ENCODE measurements at regions of chr5 and their contacts with region 1.

Region 1: GRCh38 chr5:137272826-137273225 is 226.3 kb downstream of the SPOCK1 start:
- DNase-seq: no peak
- ATAC-seq: no peak
- H3K4me3 ChIP-seq: no peak overlapping the region
- H3K27ac ChIP-seq: no peak overlapping the region
- H3K4me1 ChIP-seq: peaks cover 0 to 24% (median 11%) of the 10 kb centered on the region in 9 donors
- H3K27me3 ChIP-seq: no peaks in the 10 kb centered on the region
- CTCF ChIP-seq: no peak

Region 2: DNA sequence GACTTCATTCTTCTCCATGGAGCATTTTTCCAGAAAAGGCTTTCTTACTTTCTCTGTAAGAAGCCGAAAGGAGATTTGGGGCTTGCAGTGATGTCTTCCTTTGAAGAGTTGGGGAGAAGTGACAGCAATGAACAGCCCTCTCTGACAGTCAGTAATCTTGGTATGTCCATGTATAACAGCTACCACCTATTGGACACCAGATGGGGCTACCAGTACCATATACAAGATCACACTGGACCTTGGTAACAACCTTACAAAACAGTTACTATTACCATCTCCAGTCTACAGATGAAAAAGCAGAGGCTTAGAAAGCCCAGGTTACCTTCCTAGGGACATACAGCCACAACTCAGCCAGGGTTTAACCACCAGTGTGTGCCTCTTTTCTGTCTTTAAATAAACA is 634.7 kb before region 1 on chr5:
- intact Hi-C with region 1: no loop called
- DNase-seq: no peak
- ATAC-seq: no peak
- H3K4me3 ChIP-seq: no peak overlapping the region
- H3K27ac ChIP-seq: no peak overlapping the region
- H3K4me1 ChIP-seq: no peaks in the 10 kb centered on the region
- H3K27me3 ChIP-seq: peaks cover 0 to 34% (median 8%) of the 10 kb centered on the region in 7 donors
- CTCF ChIP-seq: no peak

Region 3: GRCh38 chr5:137262818-137263217 is 10.0 kb before region 1 on chr5:
- intact Hi-C with region 1: loop called in 1 of 10 experiments (anchors 1 kb)
- DNase-seq: no peak
- ATAC-seq: no peak
- H3K4me3 ChIP-seq: no peak overlapping the region
- H3K27ac ChIP-seq: no peak overlapping the region
- H3K4me1 ChIP-seq: peaks cover 0 to 24% (median 8%) of the 10 kb centered on the region in 9 donors
- H3K27me3 ChIP-seq: no peaks in the 10 kb centered on the region
- CTCF ChIP-seq: no peak

Measured in heart right ventricle (tissue), 16 donors.